Activated T-helper 1 cell treated with anti-CD3 and anti-CD28 coated beads, Interleukin-12 subunit alpha, Interleukin-12 subunit beta, Interleukin-2, Interleukin-4 antibody, amounts not matched to agents 30 ng/mL and 10 ng/mL and 1 ng/mL, durations not matched to agents 14 hours and 24 hours and 36 hours (primary cell): ENCODE measurements at regions of chr2 and their contacts with region 1.

Region 1: DNA sequence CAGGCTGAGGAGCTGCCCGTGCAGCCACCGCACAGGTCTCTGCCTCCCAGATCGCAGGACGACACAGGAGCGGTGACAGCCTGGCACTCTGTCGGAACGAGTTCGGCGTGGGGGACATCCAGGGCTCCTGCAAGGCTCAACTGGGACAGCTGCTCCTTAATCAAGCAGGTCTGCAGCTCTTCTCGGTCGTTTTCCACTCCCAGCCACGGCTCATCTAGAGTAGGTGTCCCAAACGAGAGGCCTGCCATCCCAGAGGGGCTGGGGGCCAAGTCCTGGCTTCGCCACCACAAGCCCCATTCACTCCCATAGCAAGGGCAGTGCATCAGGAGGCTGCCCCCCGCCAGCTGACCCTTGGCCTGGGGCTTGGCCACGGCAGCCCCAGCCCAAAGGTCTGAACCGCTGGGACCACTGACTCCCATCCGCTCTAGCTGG is 22.5 kb downstream of the PASK start:
- DNase-seq: no peak
- H3K4me3 Mint-ChIP-seq: peak overlapping the region; percentile 71
- H3K27ac Mint-ChIP-seq: peak overlapping the region; percentile 98
- H3K4me1 Mint-ChIP-seq: peaks cover 49% of the 10 kb centered on the region
- H3K27me3 Mint-ChIP-seq: no peaks in the 10 kb centered on the region

Region 2: GRCh38 chr2:241064008-241064801 is 62.6 kb before region 1 on chr2:
- intact Hi-C with region 1: no loop called
- DNase-seq: peak; percentile 22
- H3K4me3 Mint-ChIP-seq: no peak overlapping the region
- H3K27ac Mint-ChIP-seq: no peak overlapping the region
- H3K4me1 Mint-ChIP-seq: no peaks in the 10 kb centered on the region
- H3K27me3 Mint-ChIP-seq: peaks cover 7% of the 10 kb centered on the region

Region 3: DNA sequence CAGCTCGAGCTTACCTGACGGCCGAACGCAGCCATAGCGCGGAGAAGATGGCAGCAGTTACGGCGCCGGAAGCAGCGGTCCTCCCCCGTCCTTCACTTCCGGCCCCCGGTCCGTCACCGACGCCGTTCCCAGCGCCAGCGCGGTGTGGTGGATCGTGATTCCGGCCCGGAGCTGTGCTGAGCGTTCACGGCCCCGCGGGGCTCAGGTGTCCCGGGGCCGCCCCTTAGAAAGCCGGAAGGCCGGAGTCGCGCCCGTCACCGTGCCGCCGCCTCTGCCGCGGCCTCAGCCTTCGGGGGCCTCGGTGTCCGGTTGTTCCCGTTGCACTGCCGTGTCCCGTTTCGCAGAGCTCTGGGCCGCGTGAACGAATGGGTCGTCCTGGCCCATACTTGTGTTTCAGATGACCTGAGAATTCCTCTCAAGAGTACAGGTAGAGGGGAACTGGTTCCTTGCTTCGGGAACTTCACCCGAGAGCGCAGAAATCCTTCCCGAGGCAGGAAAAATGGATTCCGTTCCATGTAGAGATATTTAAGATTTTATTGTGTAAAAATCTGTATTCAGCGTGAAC is 24.5 kb before region 1 on chr2 and contains the start of gene MTERF4:
- intact Hi-C with region 1: loop called (anchors 1 kb)
- DNase-seq: peak; percentile 86
- H3K4me3 Mint-ChIP-seq: peak within 1 kb of the TSS; percentile 94
- H3K27ac Mint-ChIP-seq: peak within 1 kb of the TSS; percentile 98
- H3K4me1 Mint-ChIP-seq: peaks cover 41% of the 10 kb centered on the region
- H3K27me3 Mint-ChIP-seq: no peaks in the 10 kb centered on the region
- total RNA-seq, gene MTERF4: 40.5 and 43.3 TPM in 2 replicates